H1 (cell line): ENCODE measurements at regions of chr1 and their contacts with region 1.

Region 1: DNA sequence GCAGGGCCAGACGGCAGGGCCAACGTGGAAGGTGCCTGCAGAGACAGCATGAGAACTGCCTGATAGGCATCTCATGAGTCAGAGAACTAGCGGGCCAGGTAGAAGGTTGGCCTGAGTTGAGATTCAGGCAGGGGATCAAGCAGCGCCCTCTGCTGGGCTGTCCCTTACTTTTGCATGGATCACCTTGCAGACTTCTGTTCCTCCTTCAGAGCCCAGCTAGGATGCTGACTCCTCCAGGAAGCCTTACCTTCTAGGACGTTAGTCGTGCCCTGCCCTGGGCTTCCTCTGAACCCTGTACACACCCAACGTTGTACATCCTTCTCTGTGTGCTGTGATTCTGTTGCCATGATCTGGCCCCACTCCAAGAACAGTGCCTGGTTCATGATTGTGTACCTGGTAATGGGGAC is 231.3 kb upstream of the VAMP3 start:
- DNase-seq: peak; percentile 79 to 90
- H3K4me3 ChIP-seq: no peak overlapping the region
- H3K27ac ChIP-seq: no peak overlapping the region
- H3K4me1 ChIP-seq: peaks cover 9 to 27% (median 23%) of the 10 kb centered on the region in 4 experiments
- H3K27me3 ChIP-seq: peaks cover 0 to 4% (median 2%) of the 10 kb centered on the region in 4 experiments; a peak in 3 of 7 replicates
- CTCF ChIP-seq: peak; percentile 76 to 94 (median 84)
- EP300 ChIP-seq: no peak
- POLR2A ChIP-seq: no peak
- RAD21 ChIP-seq: peak; percentile 71 to 87

Region 2: DNA sequence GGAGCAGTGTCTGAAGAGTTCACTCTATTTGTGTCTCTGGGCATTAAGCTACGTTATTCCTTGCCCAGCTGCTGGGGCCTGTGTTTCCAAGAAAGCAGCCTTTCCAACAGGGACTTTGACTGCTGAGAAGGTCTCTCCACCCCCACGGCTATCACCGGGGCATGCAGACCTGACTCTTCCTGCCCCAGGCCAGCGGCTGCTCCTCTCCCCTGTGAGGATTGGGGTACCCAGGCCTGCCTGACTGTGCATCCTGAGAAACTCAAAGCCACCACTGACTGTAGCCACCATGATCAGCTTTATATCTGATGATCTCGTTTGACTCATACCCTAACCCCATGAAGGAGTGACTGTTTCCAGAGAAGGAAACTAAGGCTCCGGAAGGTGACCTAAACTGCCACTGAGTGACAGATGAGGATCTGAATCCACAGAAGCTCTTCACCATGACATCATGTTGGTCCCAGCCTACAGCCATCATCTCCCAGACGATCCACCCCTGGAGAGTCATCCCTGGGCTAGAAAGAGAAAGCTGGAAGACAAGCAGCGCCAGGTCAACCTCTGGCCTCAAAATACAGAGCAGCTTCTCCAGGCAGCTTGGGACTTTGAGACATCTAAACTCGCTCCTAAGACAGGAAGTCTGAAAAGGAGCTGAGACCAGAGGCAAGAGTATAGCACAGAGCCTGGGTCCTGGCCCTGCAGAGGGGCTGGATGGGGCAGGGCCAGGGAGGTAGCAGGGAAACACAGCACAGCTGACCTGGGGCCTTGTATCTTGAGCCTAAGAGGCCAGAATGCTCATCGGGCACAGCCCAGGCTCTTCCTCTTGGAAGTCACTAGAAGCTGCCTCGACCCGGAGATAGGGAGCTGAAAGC is 12.7 kb before region 1 on chr1:
- CTCF ChIA-PET with region 1: interaction called, 19 read pairs
- POLR2A ChIA-PET with region 1: interaction called, 5 read pairs
- DNase-seq: no peak
- H3K4me3 ChIP-seq: no peak overlapping the region
- H3K27ac ChIP-seq: no peak overlapping the region; the same call in 1 of the 2 replicates
- H3K4me1 ChIP-seq: peaks cover 0 to 4% (median 2%) of the 10 kb centered on the region in 4 experiments; a peak in 3 of 7 replicates
- H3K27me3 ChIP-seq: no peaks in the 10 kb centered on the region
- CTCF ChIP-seq: no peak
- EP300 ChIP-seq: no peak
- POLR2A ChIP-seq: no peak
- RAD21 ChIP-seq: no peak